Esophagus muscularis mucosa (tissue), 4 donors: ENCODE measurements at regions of chr10 and their contacts with region 1.

Region 1: GRCh38 chr10:95559471-95559870 is 1.7 kb downstream of the SORBS1 start:
- DNase-seq: no peak
- H3K4me3 ChIP-seq: peak overlapping the region; percentile 84 to 97 (median 93)
- H3K27ac ChIP-seq: peak overlapping the region; percentile 91 to 97 (median 96)
- H3K4me1 ChIP-seq: peaks cover 27 to 42% (median 33%) of the 10 kb centered on the region in 4 donors
- H3K27me3 ChIP-seq: no peaks in the 10 kb centered on the region
- CTCF ChIP-seq: no peak
- EP300 ChIP-seq: no peak
- POLR2A ChIP-seq: peak; percentile 16

Region 2: DNA sequence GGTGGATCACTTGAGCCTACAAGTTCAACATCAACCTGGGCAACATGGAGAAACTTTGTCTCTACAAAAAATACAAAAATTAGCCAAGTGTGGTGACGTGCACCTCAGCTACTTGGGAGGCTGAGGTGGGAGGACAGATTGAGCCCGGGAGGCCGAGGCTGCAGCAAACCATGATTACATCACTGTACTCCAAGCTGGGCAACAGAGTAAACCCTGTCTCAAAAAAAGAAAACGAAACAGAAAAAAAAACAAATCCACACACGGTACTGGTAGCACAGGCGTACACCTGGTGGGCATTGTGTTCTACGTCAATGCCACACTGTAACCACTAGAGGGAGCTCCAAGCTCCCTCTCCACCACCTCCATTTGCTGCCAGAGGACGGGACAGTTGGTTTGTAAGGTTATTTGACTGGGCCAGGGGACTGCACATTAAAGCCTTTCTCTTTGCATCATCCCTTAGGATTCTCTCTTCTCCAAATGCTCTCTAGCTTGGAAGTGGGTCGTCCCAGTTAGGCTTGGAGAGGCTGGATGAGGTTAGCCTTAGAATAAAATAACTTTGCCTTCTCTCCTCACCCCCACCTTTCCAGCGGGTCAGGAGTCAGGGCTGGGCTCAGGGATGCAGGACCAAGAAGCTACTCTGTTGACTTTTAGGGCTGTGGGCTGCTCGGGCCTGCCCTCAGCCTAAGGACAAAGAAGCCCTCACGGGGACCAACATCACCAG is 129.1 kb before region 1 on chr10:
- intact Hi-C with region 1: loop called (anchors 5 kb)
- DNase-seq: no peak
- H3K4me3 ChIP-seq: no peak overlapping the region
- H3K27ac ChIP-seq: peak overlapping the region; percentile 85 to 97 (median 94)
- H3K4me1 ChIP-seq: peaks cover 83 to 100% (median 99%) of the 10 kb centered on the region in 4 donors
- H3K27me3 ChIP-seq: no peaks in the 10 kb centered on the region
- CTCF ChIP-seq: peak; percentile 94 to 97 (median 95)
- EP300 ChIP-seq: no peak
- POLR2A ChIP-seq: no peak